Breast epithelium (tissue), 4 donors: ENCODE measurements at regions of chr20 and their contacts with region 1.

Region 1: GRCh38 chr20:40109136-40109535 is 579.9 kb downstream of the MAFB start:
- DNase-seq: no peak
- H3K4me3 ChIP-seq: no peak overlapping the region
- H3K27ac ChIP-seq: no peak overlapping the region
- H3K4me1 ChIP-seq: no peaks in the 10 kb centered on the region
- H3K27me3 ChIP-seq: no peaks in the 10 kb centered on the region
- CTCF ChIP-seq: no peak
- POLR2A ChIP-seq: no peak

Region 2: DNA sequence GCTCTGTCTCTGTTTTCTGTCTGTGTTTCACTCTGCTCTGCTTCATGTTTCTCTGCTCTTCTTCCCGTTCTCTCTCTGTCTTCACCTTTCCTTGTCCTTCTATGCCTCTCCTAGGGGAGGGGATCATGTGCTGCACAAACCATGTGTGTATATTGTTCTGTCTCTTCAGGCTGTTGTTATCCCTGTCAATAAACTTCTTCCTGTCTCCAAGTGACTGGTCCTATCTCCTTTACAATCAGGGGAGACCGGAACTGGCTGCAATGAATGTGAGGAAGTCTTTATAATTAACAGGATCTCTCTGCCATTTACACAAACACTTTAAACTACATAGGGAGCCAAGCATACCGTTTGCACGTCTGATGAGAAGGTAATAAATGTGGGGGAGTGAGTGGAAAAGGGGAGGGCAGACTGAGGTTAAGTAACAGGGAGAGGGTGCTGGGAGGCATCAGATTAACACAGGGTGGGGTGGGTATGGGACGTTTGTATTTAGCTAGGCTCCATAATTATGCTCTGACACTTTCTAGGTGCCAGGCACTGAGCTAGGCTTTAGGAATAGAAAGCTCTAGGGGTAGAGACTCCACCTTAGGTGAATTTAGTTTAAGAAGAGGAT is 520.9 kb before region 1 on chr20:
- intact Hi-C with region 1: loop called (anchors 10 kb)
- DNase-seq: no peak
- H3K4me3 ChIP-seq: no peak overlapping the region
- H3K27ac ChIP-seq: no peak overlapping the region
- H3K4me1 ChIP-seq: no peaks in the 10 kb centered on the region
- H3K27me3 ChIP-seq: no peaks in the 10 kb centered on the region
- CTCF ChIP-seq: no peak
- POLR2A ChIP-seq: no peak

Region 3: DNA sequence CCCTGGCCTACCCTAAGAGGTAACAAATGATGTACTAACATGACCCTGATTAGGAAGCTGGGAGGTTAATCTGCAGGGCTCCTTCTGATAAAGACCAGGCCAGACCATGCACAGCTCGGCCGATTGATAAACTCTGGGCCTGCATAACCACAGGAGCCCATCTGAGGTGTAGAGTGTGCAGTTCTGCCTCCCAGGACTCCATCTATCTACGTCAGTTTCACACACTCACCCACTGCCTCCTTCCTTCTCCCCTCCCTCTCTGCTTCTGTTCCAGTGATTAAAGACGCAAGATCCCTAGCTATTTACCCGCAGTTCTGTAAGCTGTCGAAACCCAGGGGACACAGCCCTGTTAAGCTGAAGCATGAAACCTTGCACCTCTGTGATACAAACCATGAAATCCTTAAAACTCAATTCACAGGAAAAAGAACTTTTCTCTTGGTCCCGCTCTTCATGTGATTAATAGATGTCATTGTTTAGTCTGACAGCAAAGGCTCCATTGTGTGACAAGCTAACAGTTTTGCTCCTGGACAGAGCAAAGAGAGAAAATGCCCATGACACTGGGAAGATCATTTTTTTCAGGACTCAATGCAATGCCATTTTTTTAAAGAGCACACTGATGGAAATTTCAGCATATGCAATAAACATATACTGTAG is 109.3 kb after region 1 on chr20:
- intact Hi-C with region 1: no loop called
- DNase-seq: no peak
- H3K4me3 ChIP-seq: no peak overlapping the region
- H3K27ac ChIP-seq: no peak overlapping the region
- H3K4me1 ChIP-seq: no peaks in the 10 kb centered on the region
- H3K27me3 ChIP-seq: no peaks in the 10 kb centered on the region
- CTCF ChIP-seq: no peak
- POLR2A ChIP-seq: no peak